ENCODE measurements at regions of chr4 and their contacts with region 1.

Region 1: GRCh38 chr4:21512353-21512752 is 436.2 kb downstream of the KCNIP4 start:
- DNase-seq: no peak
- H3K4me3 ChIP-seq: no peak overlapping the region
- H3K27ac ChIP-seq: no peak overlapping the region
- H3K4me1 ChIP-seq: no peaks in the 10 kb centered on the region
- H3K27me3 ChIP-seq: no peaks in the 10 kb centered on the region
- CTCF ChIP-seq: peak; percentile 48 to 60 (median 51)
- POLR2A ChIP-seq: no peak

Region 2: DNA sequence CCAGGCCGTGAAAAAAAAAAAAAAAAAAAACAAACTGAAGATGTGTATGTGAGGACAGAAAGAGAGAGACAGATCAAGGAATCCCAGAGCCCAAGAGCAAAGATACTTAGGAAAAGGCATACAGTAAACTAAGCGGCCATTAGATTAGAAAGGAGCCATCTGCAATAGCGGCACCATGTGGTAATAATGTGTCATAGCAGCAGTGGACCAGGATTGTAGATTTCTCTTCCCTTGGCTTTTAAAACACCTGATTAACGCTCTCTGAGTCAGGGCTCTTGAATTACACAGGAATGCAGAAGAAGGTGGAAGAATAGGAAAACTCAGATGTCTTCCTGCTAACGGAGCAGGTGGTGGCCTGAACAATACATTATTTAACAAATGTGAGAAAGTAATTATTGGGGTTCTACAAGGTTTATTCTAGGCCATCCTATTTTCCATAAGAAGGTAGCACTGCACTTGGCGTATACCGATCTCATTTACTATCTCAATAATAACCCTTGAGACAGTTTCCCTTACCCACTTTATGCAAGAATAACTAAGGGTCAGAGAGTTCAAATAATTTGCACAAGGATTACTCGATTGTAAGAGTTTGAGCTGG is 253.6 kb after region 1 on chr4:
- intact Hi-C with region 1: loop called (anchors 5 kb)
- DNase-seq: peak in 1 of 2 donors; percentile 26
- H3K4me3 ChIP-seq: no peak overlapping the region
- H3K27ac ChIP-seq: no peak overlapping the region
- H3K4me1 ChIP-seq: no peaks in the 10 kb centered on the region
- H3K27me3 ChIP-seq: no peaks in the 10 kb centered on the region
- CTCF ChIP-seq: peak; percentile 64 to 78 (median 74)
- POLR2A ChIP-seq: no peak